ENCODE measurements at regions of chr7 and their contacts with region 1.

Region 1: GRCh38 chr7:134632937-134633540 is 13.6 kb upstream of the BPGM start:
- DNase-seq: no peak
- ATAC-seq: peak; percentile 71
- H3K4me3 Mint-ChIP-seq: no peak overlapping the region
- H3K27ac Mint-ChIP-seq: no peak overlapping the region
- H3K4me1 Mint-ChIP-seq: peaks cover 10% of the 10 kb centered on the region
- H3K27me3 Mint-ChIP-seq: peaks cover 14% of the 10 kb centered on the region
- CTCF ChIP-seq: no peak

Region 2: DNA sequence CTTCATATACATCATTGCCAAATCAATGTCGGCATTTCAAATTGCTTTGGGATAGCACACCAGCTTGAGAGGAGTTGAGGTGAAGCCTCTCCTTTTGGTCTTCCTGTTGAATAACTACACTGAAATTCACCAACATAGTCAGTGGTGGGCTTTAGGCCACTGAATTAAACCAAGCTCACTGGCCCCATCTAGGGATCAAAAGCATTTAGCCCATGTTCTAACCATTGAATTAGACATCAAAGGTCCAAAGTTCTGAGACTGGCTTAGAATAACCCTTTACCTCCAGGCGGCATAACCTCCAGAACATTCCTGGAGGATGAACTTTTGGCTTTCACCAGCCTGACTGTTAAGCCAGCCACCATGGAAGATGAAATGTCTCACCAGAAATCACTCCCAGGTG is 68.2 kb after region 1 on chr7:
- CTCF ChIA-PET with region 1: interaction called, 56 read pairs
- POLR2A ChIA-PET with region 1: no interaction called
- intact Hi-C with region 1: loop called (anchors 1 kb)
- DNase-seq: no peak
- ATAC-seq: peak; percentile 18
- H3K4me3 Mint-ChIP-seq: no peak overlapping the region
- H3K27ac Mint-ChIP-seq: no peak overlapping the region
- H3K4me1 Mint-ChIP-seq: no peaks in the 10 kb centered on the region
- H3K27me3 Mint-ChIP-seq: peaks cover 2% of the 10 kb centered on the region
- CTCF ChIP-seq: no peak

Region 3: GRCh38 chr7:134750083-134751062 is 117.3 kb after region 1 on chr7:
- CTCF ChIA-PET with region 1: interaction called, 9 read pairs
- POLR2A ChIA-PET with region 1: no interaction called
- intact Hi-C with region 1: loop called (anchors 1 kb)
- DNase-seq: no peak
- ATAC-seq: peak; percentile 42
- H3K4me3 Mint-ChIP-seq: no peak overlapping the region
- H3K27ac Mint-ChIP-seq: no peak overlapping the region
- H3K4me1 Mint-ChIP-seq: no peaks in the 10 kb centered on the region
- H3K27me3 Mint-ChIP-seq: peaks cover 5% of the 10 kb centered on the region
- CTCF ChIP-seq: no peak

Region 4: DNA sequence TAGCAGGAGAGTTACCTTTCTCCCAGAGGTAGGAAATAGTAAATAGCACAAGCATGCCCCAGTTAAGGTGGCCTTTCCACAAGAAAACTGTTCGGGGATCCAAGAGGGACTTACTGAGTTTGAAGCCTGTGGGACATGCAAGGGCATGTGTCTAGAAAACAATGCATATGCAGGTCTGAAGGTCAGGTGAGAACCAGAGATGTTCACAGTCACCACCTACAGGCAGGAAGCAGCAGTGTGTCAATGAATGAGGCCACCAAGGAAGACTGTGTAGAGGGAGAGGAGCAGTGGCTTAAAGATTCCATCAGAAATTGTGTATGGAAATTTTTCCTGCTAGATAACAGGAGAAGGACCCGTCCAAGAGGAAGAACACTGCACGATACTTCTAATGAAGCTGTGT is 212.4 kb after region 1 on chr7:
- CTCF ChIA-PET with region 1: no interaction called
- POLR2A ChIA-PET with region 1: no interaction called
- intact Hi-C with region 1: loop called (anchors 1 kb)
- DNase-seq: no peak
- ATAC-seq: no peak
- H3K4me3 Mint-ChIP-seq: no peak overlapping the region
- H3K27ac Mint-ChIP-seq: no peak overlapping the region
- H3K4me1 Mint-ChIP-seq: no peaks in the 10 kb centered on the region
- H3K27me3 Mint-ChIP-seq: peaks cover 7% of the 10 kb centered on the region
- CTCF ChIP-seq: no peak

Region 5: GRCh38 chr7:134943764-134944400 is 310.8 kb after region 1 on chr7:
- CTCF ChIA-PET with region 1: interaction called, 30 read pairs
- POLR2A ChIA-PET with region 1: no interaction called
- intact Hi-C with region 1: loop called (anchors 1 kb)
- DNase-seq: no peak
- ATAC-seq: peak; percentile 58
- H3K4me3 Mint-ChIP-seq: no peak overlapping the region
- H3K27ac Mint-ChIP-seq: no peak overlapping the region
- H3K4me1 Mint-ChIP-seq: peaks cover 1% of the 10 kb centered on the region
- H3K27me3 Mint-ChIP-seq: no peaks in the 10 kb centered on the region
- CTCF ChIP-seq: no peak

Region 6: DNA sequence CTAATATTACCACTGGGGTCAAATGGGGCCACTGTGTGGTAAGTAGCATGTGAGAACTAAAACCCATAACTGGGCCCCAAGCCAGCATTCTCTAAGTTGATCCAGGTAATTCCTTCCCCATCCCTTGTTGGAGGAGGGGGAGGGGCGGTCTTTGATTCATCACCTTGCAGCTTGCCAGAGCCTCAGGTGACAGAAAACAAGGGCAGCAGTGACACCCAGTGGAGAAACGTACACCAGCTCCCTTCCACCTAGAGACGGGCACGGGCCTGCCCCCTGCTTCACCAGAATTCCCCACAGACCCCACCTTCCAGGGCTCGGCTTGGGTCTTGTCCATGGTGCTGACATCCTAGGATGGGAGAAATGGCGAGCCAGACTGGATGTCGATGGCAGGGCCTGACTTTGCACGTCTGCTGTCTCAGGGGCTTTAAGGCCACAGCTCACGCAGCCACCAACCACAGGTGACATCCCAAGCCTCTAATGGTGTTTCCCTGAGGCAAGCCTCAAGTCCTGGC is 702.6 kb after region 1 on chr7:
- CTCF ChIA-PET with region 1: no interaction called
- POLR2A ChIA-PET with region 1: no interaction called
- intact Hi-C with region 1: loop called (anchors 1 kb)
- DNase-seq: no peak
- ATAC-seq: no peak
- H3K4me3 Mint-ChIP-seq: no peak overlapping the region
- H3K27ac Mint-ChIP-seq: no peak overlapping the region
- H3K4me1 Mint-ChIP-seq: no peaks in the 10 kb centered on the region
- H3K27me3 Mint-ChIP-seq: no peaks in the 10 kb centered on the region
- CTCF ChIP-seq: no peak

Region 7: DNA sequence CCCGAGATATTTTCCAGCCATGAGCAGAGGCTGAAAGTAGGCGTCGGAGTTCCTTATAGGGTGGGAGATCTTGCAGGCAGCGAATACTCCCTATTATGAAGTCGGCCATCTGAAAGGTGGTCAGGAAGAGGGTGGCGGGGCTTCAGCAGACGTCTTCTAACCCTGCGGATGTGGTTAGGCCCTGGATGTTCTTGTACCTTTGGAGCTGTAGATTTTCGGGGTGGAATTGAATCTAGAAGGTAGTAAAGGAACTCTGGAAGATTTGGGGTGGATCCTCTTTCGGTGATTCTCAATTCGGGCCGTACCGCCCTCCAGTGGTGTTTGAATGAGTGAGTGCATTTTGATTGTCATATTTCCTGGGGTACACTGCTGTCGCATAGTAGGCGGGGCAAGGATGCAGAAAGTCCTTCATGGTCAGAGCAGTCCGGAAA is 925.3 kb after region 1 on chr7:
- CTCF ChIA-PET with region 1: no interaction called
- POLR2A ChIA-PET with region 1: no interaction called
- intact Hi-C with region 1: no loop called
- DNase-seq: peak; percentile 46
- ATAC-seq: peak; percentile 56
- H3K4me3 Mint-ChIP-seq: no peak overlapping the region
- H3K27ac Mint-ChIP-seq: no peak overlapping the region
- H3K4me1 Mint-ChIP-seq: peaks cover 16% of the 10 kb centered on the region
- H3K27me3 Mint-ChIP-seq: no peaks in the 10 kb centered on the region
- CTCF ChIP-seq: peak; percentile 29

Measured in activated B cell treated with CpG ODN at 0.5 μM for 24 hours (primary cell).